ENCODE measurements at regions of chr15 and their contacts with region 1.

Region 1: GRCh38 chr15:55407949-55408791 is at the starts of genes CCPG1 and PIERCE2:
- DNase-seq: peak; percentile 92
- H3K4me3 ChIP-seq: peak within 1 kb of the TSS; percentile 66 to 81 (median 78)
- H3K27ac ChIP-seq: peak within 1 kb of the TSS; percentile 78
- H3K4me1 ChIP-seq: peaks cover 5% of the 10 kb centered on the region
- H3K27me3 ChIP-seq: no peaks in the 10 kb centered on the region
- CTCF ChIP-seq: peak; percentile 28 to 69
- total RNA-seq, gene CCPG1: 38.2 to 66.5 TPM
- total RNA-seq, gene PIERCE2: 2.5 to 3.3 TPM

Region 2: GRCh38 chr15:55084216-55084615 is 324.0 kb before region 1 on chr15:
- CTCF ChIA-PET with region 1: no interaction called
- dilution Hi-C with region 1: no loop called
- in situ Hi-C with region 1: no loop called
- intact Hi-C with region 1: no loop called
- DNase-seq: no peak
- H3K4me3 ChIP-seq: no peak overlapping the region
- H3K27ac ChIP-seq: no peak overlapping the region
- H3K4me1 ChIP-seq: no peaks in the 10 kb centered on the region
- H3K27me3 ChIP-seq: peaks cover 1% of the 10 kb centered on the region
- CTCF ChIP-seq: no peak

Region 3: GRCh38 chr15:55196458-55197361 is 211.5 kb before region 1 on chr15 and contains the start of gene RSL24D1:
- CTCF ChIA-PET with region 1: no interaction called
- dilution Hi-C with region 1: no loop called
- in situ Hi-C with region 1: no loop called
- intact Hi-C with region 1: loop called (anchors 2 kb)
- DNase-seq: peak; percentile 99
- H3K4me3 ChIP-seq: peak within 1 kb of the TSS; percentile 65 to 97 (median 89)
- H3K27ac ChIP-seq: peak within 1 kb of the TSS; percentile 91
- H3K4me1 ChIP-seq: peaks cover 13% of the 10 kb centered on the region
- H3K27me3 ChIP-seq: no peaks in the 10 kb centered on the region
- CTCF ChIP-seq: peak; percentile 25 to 49
- total RNA-seq, gene RSL24D1: 94.7 to 114 TPM

Region 4: GRCh38 chr15:55318588-55319494 is 89.3 kb before region 1 on chr15 and contains the starts of genes PIGB and PIGBOS1:
- CTCF ChIA-PET with region 1: interaction called, 5 read pairs
- dilution Hi-C with region 1: no loop called
- in situ Hi-C with region 1: no loop called
- intact Hi-C with region 1: loop called (anchors 10 kb)
- DNase-seq: peak; percentile 85
- H3K4me3 ChIP-seq: peak within 1 kb of the TSS; percentile 63 to 88 (median 67)
- H3K27ac ChIP-seq: peak within 1 kb of the TSS; percentile 89
- H3K4me1 ChIP-seq: peaks cover 4% of the 10 kb centered on the region
- H3K27me3 ChIP-seq: no peaks in the 10 kb centered on the region
- CTCF ChIP-seq: no peak
- total RNA-seq, gene PIGB: 23.8 to 24.4 TPM
- total RNA-seq, gene PIGBOS1: 3.8 to 10.9 TPM

Region 5: GRCh38 chr15:55344206-55344605 is 64.0 kb before region 1 on chr15:
- CTCF ChIA-PET with region 1: no interaction called
- dilution Hi-C with region 1: no loop called
- in situ Hi-C with region 1: no loop called
- intact Hi-C with region 1: loop called (anchors 1 kb)
- DNase-seq: peak; percentile 43
- H3K4me3 ChIP-seq: no peak overlapping the region
- H3K27ac ChIP-seq: no peak overlapping the region
- H3K4me1 ChIP-seq: peaks cover 8% of the 10 kb centered on the region
- H3K27me3 ChIP-seq: no peaks in the 10 kb centered on the region
- CTCF ChIP-seq: no peak

Region 6: GRCh38 chr15:55389276-55389631 is 18.9 kb before region 1 on chr15:
- CTCF ChIA-PET with region 1: interaction called, 11 read pairs
- dilution Hi-C with region 1: no loop called
- in situ Hi-C with region 1: no loop called
- intact Hi-C with region 1: loop called (anchors 1 kb)
- DNase-seq: peak; percentile 77
- H3K4me3 ChIP-seq: no peak overlapping the region
- H3K27ac ChIP-seq: peak overlapping the region; percentile 59
- H3K4me1 ChIP-seq: peaks cover 15% of the 10 kb centered on the region
- H3K27me3 ChIP-seq: no peaks in the 10 kb centered on the region
- CTCF ChIP-seq: no peak

Region 7: GRCh38 chr15:55599439-55599838 is 191.3 kb after region 1 on chr15:
- CTCF ChIA-PET with region 1: no interaction called
- dilution Hi-C with region 1: no loop called
- in situ Hi-C with region 1: no loop called
- intact Hi-C with region 1: no loop called
- DNase-seq: no peak
- H3K4me3 ChIP-seq: no peak overlapping the region
- H3K27ac ChIP-seq: no peak overlapping the region
- H3K4me1 ChIP-seq: no peaks in the 10 kb centered on the region
- H3K27me3 ChIP-seq: peaks cover 3% of the 10 kb centered on the region
- CTCF ChIP-seq: no peak

Measured in mammary epithelial cell (primary cell).